Activated CD4-positive, alpha-beta T cell treated with anti-CD3 and anti-CD28 coated beads, Interleukin-2, amount 10 ng/mL, durations not matched to agents 24 days and 14 days (primary cell): ENCODE measurements at regions of chr2 and their contacts with region 1.

Region 1: DNA sequence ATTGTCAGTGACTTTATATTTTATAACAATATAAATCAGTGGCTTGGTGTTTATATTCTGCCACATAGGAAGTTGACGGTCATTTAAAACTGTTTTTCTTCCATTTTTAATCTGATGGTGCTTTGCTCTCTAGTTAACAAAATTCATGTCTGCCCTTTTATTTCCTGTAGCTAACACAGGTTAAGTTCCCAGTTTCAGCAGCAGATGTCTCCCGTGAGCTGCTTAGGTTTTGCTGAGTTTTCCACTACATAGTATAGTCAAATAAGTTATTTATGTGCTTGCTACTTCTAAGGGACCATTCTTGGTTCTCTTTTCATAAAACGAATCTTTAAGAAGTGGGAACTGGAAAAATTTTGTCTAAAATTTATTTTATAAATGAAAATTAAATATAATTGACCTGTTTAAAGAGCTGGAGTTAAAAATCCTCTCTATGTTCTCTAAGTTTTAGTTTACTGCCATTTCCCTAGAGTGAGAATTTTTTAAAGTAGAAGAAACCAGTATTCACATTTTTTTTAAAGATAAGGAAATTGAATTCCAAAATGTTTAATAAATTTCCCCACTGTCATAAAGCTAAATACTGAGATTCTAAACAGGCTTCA is 20.6 kb downstream of the HTR2B start:
- DNase-seq: peak; percentile 85
- H3K4me3 Mint-ChIP-seq: no peak overlapping the region
- H3K27ac Mint-ChIP-seq: no peak overlapping the region
- H3K4me1 Mint-ChIP-seq: peaks cover 6% of the 10 kb centered on the region
- H3K27me3 Mint-ChIP-seq: no peaks in the 10 kb centered on the region

Region 2: DNA sequence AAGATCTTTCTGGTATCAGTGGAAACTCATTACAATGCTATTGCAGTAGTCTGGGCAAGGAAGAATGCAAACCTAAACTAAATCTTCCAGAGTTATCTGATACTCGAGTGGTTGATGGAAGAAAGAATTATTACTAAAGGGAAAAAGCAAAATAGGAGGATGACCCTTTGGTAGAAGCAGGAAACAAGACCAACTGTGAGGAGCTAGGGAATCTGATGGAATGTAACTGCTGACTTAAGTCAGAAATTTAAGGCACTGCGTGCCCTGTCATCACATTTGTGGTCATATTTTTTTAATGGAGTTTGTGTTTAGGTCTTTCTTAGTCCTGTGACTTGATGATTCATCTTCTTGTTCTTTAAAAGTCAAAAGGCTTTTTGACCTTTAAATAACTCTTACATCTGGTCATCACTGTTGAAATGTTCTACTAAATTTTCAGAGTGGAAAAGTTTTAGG is 57.7 kb after region 1 on chr2:
- intact Hi-C with region 1: loop called (anchors 5 kb)
- DNase-seq: peak; percentile 24
- H3K4me3 Mint-ChIP-seq: peak overlapping the region; percentile 32
- H3K27ac Mint-ChIP-seq: peak overlapping the region; percentile 85
- H3K4me1 Mint-ChIP-seq: peaks cover 18% of the 10 kb centered on the region
- H3K27me3 Mint-ChIP-seq: no peaks in the 10 kb centered on the region

Region 3: GRCh38 chr2:231227309-231228162 is 123.3 kb after region 1 on chr2:
- intact Hi-C with region 1: loop called (anchors 2 kb)
- DNase-seq: peak; percentile 85
- H3K4me3 Mint-ChIP-seq: no peak overlapping the region
- H3K27ac Mint-ChIP-seq: no peak overlapping the region
- H3K4me1 Mint-ChIP-seq: no peaks in the 10 kb centered on the region
- H3K27me3 Mint-ChIP-seq: no peaks in the 10 kb centered on the region

Region 4: DNA sequence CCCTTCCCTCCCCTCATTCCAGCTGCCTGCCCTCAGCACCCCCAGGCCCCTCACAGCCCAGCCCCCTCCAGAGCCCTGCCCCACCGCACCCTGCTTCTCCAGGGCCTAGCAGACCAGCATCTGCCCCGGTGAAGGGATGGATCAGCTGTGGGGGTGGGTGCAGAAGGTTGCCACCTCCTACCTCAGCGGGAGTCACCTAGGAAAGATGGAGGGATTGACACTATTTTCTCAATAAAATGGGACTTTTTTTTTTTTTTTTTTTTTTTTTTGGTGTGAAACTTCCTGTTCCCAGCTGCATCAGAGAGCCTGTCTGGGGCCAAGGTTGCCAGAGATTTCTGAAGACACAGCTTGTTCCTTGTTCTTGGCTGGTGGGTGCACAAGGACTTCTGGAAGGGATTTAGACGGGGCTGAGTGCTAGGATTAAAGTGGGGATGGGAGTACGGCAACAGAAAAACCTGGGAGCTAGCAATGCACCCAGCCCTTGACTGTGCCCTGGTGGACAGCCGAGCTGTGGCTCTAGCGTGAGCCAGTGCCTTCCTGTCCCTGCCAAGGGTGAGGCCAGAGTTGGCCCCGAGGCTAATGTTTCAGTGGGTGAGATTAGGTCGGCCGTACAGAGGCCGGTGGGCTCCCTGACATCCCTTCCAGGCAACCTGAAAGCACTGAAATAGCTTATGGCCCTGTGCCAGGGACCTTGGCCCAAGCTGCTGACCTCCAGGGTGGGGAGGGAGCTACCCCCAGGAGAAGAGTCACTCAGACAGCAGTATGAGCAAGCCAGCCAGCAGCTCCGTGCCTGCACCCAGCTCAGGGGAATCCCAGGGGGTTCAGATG is 295.9 kb after region 1 on chr2:
- intact Hi-C with region 1: loop called (anchors 2 kb)
- DNase-seq: no peak
- H3K4me3 Mint-ChIP-seq: no peak overlapping the region
- H3K27ac Mint-ChIP-seq: no peak overlapping the region
- H3K4me1 Mint-ChIP-seq: peaks cover 2% of the 10 kb centered on the region
- H3K27me3 Mint-ChIP-seq: peaks cover 17% of the 10 kb centered on the region

Region 5: GRCh38 chr2:231452799-231453508 is 348.7 kb after region 1 on chr2:
- intact Hi-C with region 1: loop called (anchors 2 kb)
- DNase-seq: no peak
- H3K4me3 Mint-ChIP-seq: no peak overlapping the region
- H3K27ac Mint-ChIP-seq: peak overlapping the region; percentile 60
- H3K4me1 Mint-ChIP-seq: peaks cover 17% of the 10 kb centered on the region
- H3K27me3 Mint-ChIP-seq: no peaks in the 10 kb centered on the region